Naive thymus-derived CD4-positive, alpha-beta T cell (primary cell): ENCODE measurements at regions of chr2 and their contacts with region 1.

Region 1: DNA sequence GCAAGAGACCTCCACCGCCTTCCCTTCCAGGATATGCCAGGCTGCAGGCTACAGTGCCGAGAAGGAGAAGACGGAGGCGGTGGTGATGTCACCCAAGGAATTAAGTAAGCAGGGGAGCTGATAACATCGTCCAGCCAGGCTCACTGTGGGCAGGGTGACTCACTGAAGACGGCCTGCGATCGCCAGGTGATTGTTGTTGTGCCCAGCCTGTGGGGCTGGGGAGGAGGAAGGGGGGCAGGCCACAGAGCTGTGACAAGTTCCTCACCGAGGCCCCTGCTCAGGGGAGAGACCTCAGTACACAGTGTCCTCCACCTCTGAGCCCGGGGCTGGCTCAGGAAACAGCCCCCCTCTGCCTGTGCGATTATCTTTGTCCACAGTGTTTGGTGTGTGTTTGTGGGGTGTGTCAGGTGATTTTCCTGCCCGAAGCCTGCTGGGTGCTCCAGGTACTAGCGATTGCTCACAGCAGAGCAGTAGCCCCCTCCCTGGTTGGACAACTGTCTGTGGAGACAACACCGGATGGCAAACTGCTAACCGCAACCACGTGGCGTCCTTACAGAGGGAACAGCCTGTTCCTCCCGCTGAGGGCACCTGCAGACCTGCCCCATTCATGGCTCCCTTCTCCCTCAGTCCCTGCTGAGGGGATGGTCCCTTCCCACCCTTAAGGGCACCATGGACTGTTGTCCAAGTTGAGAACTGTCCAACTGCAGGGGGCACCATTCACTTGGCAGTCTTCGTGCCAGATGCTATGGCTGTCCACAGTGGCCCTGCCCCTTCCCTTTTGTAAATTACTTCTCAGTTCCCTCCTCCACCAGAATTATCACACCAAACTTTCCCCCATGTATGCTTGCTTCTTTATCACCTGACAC is 95.1 kb downstream of the ZFP36L2 start:
- DNase-seq: peak; percentile 44 to 92 (median 82)
- ATAC-seq: peak; percentile 60
- H3K4me3 ChIP-seq: peak overlapping the region; percentile 51
- H3K4me3 Mint-ChIP-seq: peak overlapping the region; percentile 36 to 86 (median 68)
- H3K27ac ChIP-seq: peak overlapping the region; percentile 96
- H3K27ac Mint-ChIP-seq: peak overlapping the region; percentile 88 to 100 (median 98)
- H3K4me1 ChIP-seq: peaks cover 90 to 92% of the 10 kb centered on the region in 2 donors
- H3K4me1 Mint-ChIP-seq: peaks cover 67 to 89% (median 85%) of the 10 kb centered on the region in 7 donors
- H3K27me3 ChIP-seq: no peaks in the 10 kb centered on the region
- H3K27me3 Mint-ChIP-seq: no peaks in the 10 kb centered on the region

Region 2: DNA sequence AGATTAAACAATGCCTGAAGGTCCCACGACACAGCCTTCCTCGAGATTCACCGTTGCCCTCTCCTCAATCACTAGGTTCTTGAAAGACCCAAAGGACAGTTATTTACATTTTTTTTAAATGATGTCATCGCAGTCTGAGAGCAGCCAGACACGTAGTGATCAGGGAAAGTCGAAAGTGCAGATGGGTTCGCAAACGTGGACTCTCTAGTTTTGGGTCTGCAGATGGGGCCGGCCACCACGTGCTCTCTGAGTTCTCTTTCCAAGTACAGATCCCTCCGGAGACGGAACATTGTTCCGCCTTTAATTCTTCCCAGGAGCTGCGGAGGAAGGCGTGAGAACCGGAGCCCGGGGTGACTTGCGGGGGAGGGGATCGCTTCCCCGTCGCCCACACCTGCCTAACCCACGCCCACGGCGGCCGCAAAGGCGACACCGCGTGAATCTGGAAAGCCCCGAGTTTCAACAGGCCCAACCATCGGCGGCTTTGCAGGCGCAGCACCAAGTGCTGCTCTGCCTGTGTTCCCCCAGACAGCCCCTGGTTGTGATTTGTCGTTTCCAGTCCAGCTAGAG is 1029.2 kb before region 1 on chr2:
- CTCF ChIA-PET with region 1: no interaction called
- POLR2A ChIA-PET with region 1: no interaction called
- intact Hi-C with region 1: loop called (anchors 10 kb)
- DNase-seq: peak; percentile 87 to 97 (median 94)
- ATAC-seq: peak; percentile 85
- H3K4me3 ChIP-seq: peak overlapping the region; percentile 44
- H3K4me3 Mint-ChIP-seq: peak overlapping the region in 8 of 10 donors; percentile 76 to 91 (median 85)
- H3K27ac ChIP-seq: peak overlapping the region; percentile 95
- H3K27ac Mint-ChIP-seq: peak overlapping the region in 2 of 9 donors; percentile 97 to 99
- H3K4me1 ChIP-seq: peaks cover 74 to 81% of the 10 kb centered on the region in 2 donors
- H3K4me1 Mint-ChIP-seq: peaks cover 37 to 69% (median 50%) of the 10 kb centered on the region in 7 donors
- H3K27me3 ChIP-seq: no peaks in the 10 kb centered on the region
- H3K27me3 Mint-ChIP-seq: no peaks in the 10 kb centered on the region

Region 3: DNA sequence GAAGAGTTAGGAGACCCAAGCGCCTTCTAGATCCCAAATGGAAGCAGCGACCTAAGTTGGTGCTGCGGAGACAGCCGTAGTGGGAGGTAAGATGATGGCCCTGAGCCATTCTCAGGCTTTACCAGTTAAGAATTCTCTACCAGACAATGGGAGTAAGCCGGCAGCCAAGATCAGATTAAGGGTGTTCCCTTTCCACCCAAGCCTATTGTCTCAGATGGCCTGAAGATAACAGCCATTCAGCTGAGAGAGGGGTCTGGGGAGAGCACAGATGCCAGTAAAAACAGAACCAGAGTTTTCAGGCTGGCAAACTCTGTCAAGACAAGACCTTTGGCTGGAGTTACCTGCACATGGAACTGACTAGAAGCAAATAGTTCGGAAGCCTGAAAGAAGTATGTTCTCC is 147.2 kb before region 1 on chr2:
- CTCF ChIA-PET with region 1: no interaction called
- POLR2A ChIA-PET with region 1: no interaction called
- intact Hi-C with region 1: no loop called
- DNase-seq: no peak
- ATAC-seq: no peak
- H3K4me3 ChIP-seq: no peak overlapping the region
- H3K4me3 Mint-ChIP-seq: no peak overlapping the region
- H3K27ac ChIP-seq: no peak overlapping the region
- H3K27ac Mint-ChIP-seq: no peak overlapping the region
- H3K4me1 ChIP-seq: no peaks in the 10 kb centered on the region
- H3K4me1 Mint-ChIP-seq: peaks cover 0 to under 1% (median 0%) of the 10 kb centered on the region in 7 donors
- H3K27me3 ChIP-seq: no peaks in the 10 kb centered on the region
- H3K27me3 Mint-ChIP-seq: peaks cover 0 to 21% (median 0%) of the 10 kb centered on the region in 5 donors

Region 4: DNA sequence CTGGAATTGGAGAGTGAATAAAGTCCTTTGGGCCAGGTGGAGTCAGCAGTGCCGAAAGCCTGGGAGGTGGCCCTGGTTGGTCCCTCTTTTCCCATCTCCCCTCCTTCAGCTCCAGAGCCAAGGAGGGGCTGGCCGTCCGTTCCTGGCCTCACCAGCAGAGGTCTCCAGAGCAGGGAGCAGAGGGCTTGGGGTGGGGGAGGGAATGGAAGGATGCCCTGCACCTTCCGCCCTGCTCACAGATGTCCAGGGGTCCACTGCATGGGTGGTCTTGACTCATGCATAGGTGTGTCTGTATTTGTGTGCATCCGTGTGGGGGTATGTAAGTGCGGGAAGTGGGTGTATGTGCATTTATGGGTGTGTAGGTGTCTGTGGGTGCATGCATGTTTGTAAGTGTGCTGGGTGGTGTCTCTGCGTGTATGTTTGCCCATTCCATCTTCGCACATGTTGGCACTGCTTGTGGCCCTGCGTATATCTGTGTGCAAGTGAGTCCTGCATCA is 106.7 kb before region 1 on chr2:
- CTCF ChIA-PET with region 1: interaction called, 9 read pairs
- POLR2A ChIA-PET with region 1: no interaction called
- intact Hi-C with region 1: loop called in 1 of 2 experiments (anchors 2 kb)
- DNase-seq: peak in 5 of 9 donors; percentile 21 to 43 (median 25)
- ATAC-seq: peak; percentile 65
- H3K4me3 ChIP-seq: no peak overlapping the region
- H3K4me3 Mint-ChIP-seq: peak overlapping the region in 4 of 10 donors; percentile 1 to 63 (median 31)
- H3K27ac ChIP-seq: no peak overlapping the region
- H3K27ac Mint-ChIP-seq: peak overlapping the region in 7 of 9 donors; percentile 25 to 92 (median 47)
- H3K4me1 ChIP-seq: peaks cover 0 to 9% of the 10 kb centered on the region in 2 donors
- H3K4me1 Mint-ChIP-seq: peaks cover 0 to 50% (median 34%) of the 10 kb centered on the region in 7 donors
- H3K27me3 ChIP-seq: no peaks in the 10 kb centered on the region
- H3K27me3 Mint-ChIP-seq: peaks cover 0 to 9% (median 0%) of the 10 kb centered on the region in 5 donors

Region 5: GRCh38 chr2:43178602-43179542 is 47.6 kb after region 1 on chr2:
- CTCF ChIA-PET with region 1: interaction called, 10 read pairs
- POLR2A ChIA-PET with region 1: interaction called, 1,274 read pairs
- intact Hi-C with region 1: loop called (anchors 1 kb)
- DNase-seq: peak in 1 of 9 donors; percentile 30
- ATAC-seq: no peak
- H3K4me3 ChIP-seq: peak overlapping the region; percentile 17
- H3K4me3 Mint-ChIP-seq: peak overlapping the region; percentile 53 to 79 (median 71)
- H3K27ac ChIP-seq: peak overlapping the region; percentile 66
- H3K27ac Mint-ChIP-seq: peak overlapping the region; percentile 94 to 99 (median 97)
- H3K4me1 ChIP-seq: peaks cover 49 to 70% of the 10 kb centered on the region in 2 donors
- H3K4me1 Mint-ChIP-seq: peaks cover 52 to 78% (median 75%) of the 10 kb centered on the region in 7 donors
- H3K27me3 ChIP-seq: no peaks in the 10 kb centered on the region
- H3K27me3 Mint-ChIP-seq: no peaks in the 10 kb centered on the region

Region 6: DNA sequence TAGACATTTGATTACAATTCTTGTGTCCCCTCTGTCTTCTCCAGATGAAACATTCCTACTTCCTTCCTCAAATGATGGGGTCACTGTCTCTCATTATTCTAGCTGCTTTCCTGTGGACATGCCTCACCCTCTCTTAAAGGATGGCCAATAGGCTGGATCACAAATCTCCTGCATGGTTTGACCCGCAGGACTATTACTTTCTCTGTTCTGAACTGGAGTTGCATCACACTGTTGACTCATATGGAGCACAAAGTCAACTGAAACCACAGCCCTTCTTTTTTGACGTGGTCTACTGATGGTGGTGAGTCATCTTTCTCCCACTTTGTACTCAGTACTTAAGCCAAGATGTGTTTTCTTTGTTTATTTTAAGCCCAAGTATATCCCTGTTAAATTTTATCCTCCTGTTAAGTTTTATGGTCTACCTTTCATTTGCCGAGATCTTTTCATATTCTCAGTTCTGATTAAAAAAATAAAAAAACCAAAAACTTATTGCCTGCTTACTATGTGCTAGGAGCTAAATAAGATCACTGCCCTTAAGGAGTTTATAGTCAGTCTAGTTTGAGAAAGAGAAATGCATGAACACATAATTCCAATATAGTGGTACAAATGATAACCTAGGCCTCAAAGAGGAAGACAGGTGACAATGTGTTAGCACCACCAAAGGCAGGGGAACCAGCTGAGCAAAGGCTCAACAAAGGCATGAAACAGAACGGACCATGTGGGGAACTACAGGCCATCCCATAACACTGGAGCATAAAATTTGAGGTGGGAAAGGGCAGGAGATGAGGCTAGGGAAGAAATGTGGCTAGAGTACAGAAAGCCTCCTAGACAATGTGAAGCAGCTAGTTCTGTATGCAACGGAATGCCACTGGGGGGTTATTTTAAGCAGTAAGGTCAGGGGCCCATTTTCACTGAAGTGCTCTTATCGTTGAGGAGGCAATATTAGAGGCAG is 162.8 kb after region 1 on chr2:
- CTCF ChIA-PET with region 1: no interaction called
- POLR2A ChIA-PET with region 1: no interaction called
- intact Hi-C with region 1: loop called in 1 of 2 experiments (anchors 5 kb)
- DNase-seq: peak in 1 of 9 donors; percentile 54
- ATAC-seq: peak; percentile 93
- H3K4me3 ChIP-seq: no peak overlapping the region
- H3K4me3 Mint-ChIP-seq: peak overlapping the region in 1 of 10 donors; percentile 46
- H3K27ac ChIP-seq: no peak overlapping the region
- H3K27ac Mint-ChIP-seq: peak overlapping the region in 5 of 9 donors; percentile 14 to 84 (median 51)
- H3K4me1 ChIP-seq: no peaks in the 10 kb centered on the region
- H3K4me1 Mint-ChIP-seq: peaks cover 0 to 25% (median 8%) of the 10 kb centered on the region in 7 donors
- H3K27me3 ChIP-seq: no peaks in the 10 kb centered on the region
- H3K27me3 Mint-ChIP-seq: no peaks in the 10 kb centered on the region

Region 7: GRCh38 chr2:43542285-43542937 is 411.2 kb after region 1 on chr2:
- CTCF ChIA-PET with region 1: no interaction called
- POLR2A ChIA-PET with region 1: no interaction called
- intact Hi-C with region 1: loop called (anchors 1 kb)
- DNase-seq: peak in 7 of 9 donors; percentile 43 to 70 (median 48)
- ATAC-seq: peak; percentile 82
- H3K4me3 ChIP-seq: no peak overlapping the region
- H3K4me3 Mint-ChIP-seq: no peak overlapping the region
- H3K27ac ChIP-seq: no peak overlapping the region
- H3K27ac Mint-ChIP-seq: no peak overlapping the region
- H3K4me1 ChIP-seq: peaks cover 0 to 3% of the 10 kb centered on the region in 2 donors
- H3K4me1 Mint-ChIP-seq: peaks cover 9 to 18% (median 15%) of the 10 kb centered on the region in 7 donors
- H3K27me3 ChIP-seq: no peaks in the 10 kb centered on the region
- H3K27me3 Mint-ChIP-seq: no peaks in the 10 kb centered on the region

Region 8: DNA sequence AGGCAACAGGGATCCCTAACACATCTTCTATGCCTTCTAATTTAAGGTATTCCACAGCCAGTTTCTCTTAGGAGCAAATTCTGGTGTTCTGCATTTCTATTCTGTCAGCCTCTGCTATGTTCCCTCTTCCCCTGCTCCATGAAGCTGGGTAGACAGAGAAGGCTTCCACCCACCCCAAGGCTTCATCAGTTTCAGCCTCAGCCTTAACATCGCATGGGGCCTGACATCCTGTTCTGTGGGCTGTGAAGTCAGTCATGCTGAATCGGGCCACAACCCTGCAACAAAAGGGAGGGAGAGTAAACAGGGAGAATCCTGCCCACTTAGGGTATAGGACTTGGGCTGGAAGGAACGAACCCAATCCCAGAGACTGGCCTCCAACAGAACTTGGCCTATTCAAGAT is 966.8 kb after region 1 on chr2:
- CTCF ChIA-PET with region 1: no interaction called
- POLR2A ChIA-PET with region 1: no interaction called
- intact Hi-C with region 1: no loop called
- DNase-seq: no peak
- ATAC-seq: no peak
- H3K4me3 ChIP-seq: no peak overlapping the region
- H3K4me3 Mint-ChIP-seq: no peak overlapping the region
- H3K27ac ChIP-seq: no peak overlapping the region
- H3K27ac Mint-ChIP-seq: peak overlapping the region in 1 of 9 donors; percentile 16
- H3K4me1 ChIP-seq: no peaks in the 10 kb centered on the region
- H3K4me1 Mint-ChIP-seq: peaks cover 3 to 18% (median 9%) of the 10 kb centered on the region in 7 donors
- H3K27me3 ChIP-seq: no peaks in the 10 kb centered on the region
- H3K27me3 Mint-ChIP-seq: peaks cover 0 to 2% (median 0%) of the 10 kb centered on the region in 5 donors